WTC11 (cell line): ENCODE measurements at regions of chr16 and their contacts with region 1.

Region 1: GRCh38 chr16:29862884-29863668 is at the start of gene CDIPT:
- DNase-seq: peak; percentile 94
- ATAC-seq: peak; percentile 98
- H3K4me3 Mint-ChIP-seq: peak within 1 kb of the TSS; percentile 98
- H3K27ac Mint-ChIP-seq: peak within 1 kb of the TSS; percentile 100
- H3K4me1 Mint-ChIP-seq: peaks cover 8% of the 10 kb centered on the region
- H3K27me3 Mint-ChIP-seq: no peaks in the 10 kb centered on the region
- CTCF ChIP-seq: no peak
- total RNA-seq, gene CDIPT: 70.7 to 71.7 TPM (median 70.9 TPM) in 3 replicates

Region 2: GRCh38 chr16:29877266-29877961 is 14.3 kb after region 1 on chr16:
- CTCF ChIA-PET with region 1: interaction called, 11 read pairs
- POLR2A ChIA-PET with region 1: interaction called, 5 read pairs
- DNase-seq: peak; percentile 100
- ATAC-seq: peak; percentile 97
- H3K4me3 Mint-ChIP-seq: peak overlapping the region; percentile 87
- H3K27ac Mint-ChIP-seq: peak overlapping the region; percentile 98
- H3K4me1 Mint-ChIP-seq: peaks cover 10% of the 10 kb centered on the region
- H3K27me3 Mint-ChIP-seq: peaks cover 3% of the 10 kb centered on the region; the same call in 1 of the 2 replicates
- CTCF ChIP-seq: no peak